Naive thymus-derived CD4-positive, alpha-beta T cell (primary cell): ENCODE measurements at regions of chr5 and their contacts with region 1.

Region 1: DNA sequence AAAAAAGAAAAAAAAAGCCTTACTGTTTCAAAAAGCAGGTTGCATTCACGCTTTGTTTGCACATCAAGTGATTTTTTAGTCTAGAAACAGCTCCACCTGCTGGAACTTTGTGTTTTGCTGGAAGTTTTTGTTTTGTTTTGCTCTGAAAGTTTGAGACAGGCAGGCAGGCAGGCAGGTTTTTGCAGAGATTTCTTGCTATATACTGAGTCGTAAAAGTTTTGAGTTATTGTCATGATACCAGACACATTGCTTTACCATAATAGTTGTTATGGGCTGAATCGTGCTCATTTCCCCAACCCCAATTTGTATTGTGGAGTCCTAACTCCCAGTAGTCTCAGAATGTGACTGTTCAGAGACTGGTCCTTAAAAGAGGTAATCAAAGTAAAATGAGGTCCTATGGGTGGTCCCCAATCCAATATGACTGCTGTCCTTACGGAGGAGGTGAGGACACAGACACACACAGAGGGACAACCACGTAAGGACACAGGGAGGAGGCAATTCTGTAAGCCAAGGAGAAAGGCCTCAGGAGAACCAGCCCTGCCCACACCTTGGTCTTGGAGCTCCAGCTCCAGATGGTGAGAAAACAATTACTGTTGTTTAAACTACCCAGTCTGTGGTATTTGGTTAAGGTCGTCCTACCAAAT is 20.9 kb downstream of the OR2Y1 start:
- DNase-seq: peak in 7 of 9 donors; percentile 32 to 71 (median 63)
- ATAC-seq: no peak
- H3K4me3 ChIP-seq: no peak overlapping the region
- H3K4me3 Mint-ChIP-seq: no peak overlapping the region
- H3K27ac ChIP-seq: no peak overlapping the region
- H3K27ac Mint-ChIP-seq: peak overlapping the region in 3 of 9 donors; percentile 1 to 54 (median 14)
- H3K4me1 ChIP-seq: peaks cover 0 to 16% of the 10 kb centered on the region in 2 donors
- H3K4me1 Mint-ChIP-seq: peaks cover 6 to 21% (median 17%) of the 10 kb centered on the region in 7 donors
- H3K27me3 ChIP-seq: no peaks in the 10 kb centered on the region
- H3K27me3 Mint-ChIP-seq: peaks cover 0 to 15% (median 0%) of the 10 kb centered on the region in 5 donors

Region 2: DNA sequence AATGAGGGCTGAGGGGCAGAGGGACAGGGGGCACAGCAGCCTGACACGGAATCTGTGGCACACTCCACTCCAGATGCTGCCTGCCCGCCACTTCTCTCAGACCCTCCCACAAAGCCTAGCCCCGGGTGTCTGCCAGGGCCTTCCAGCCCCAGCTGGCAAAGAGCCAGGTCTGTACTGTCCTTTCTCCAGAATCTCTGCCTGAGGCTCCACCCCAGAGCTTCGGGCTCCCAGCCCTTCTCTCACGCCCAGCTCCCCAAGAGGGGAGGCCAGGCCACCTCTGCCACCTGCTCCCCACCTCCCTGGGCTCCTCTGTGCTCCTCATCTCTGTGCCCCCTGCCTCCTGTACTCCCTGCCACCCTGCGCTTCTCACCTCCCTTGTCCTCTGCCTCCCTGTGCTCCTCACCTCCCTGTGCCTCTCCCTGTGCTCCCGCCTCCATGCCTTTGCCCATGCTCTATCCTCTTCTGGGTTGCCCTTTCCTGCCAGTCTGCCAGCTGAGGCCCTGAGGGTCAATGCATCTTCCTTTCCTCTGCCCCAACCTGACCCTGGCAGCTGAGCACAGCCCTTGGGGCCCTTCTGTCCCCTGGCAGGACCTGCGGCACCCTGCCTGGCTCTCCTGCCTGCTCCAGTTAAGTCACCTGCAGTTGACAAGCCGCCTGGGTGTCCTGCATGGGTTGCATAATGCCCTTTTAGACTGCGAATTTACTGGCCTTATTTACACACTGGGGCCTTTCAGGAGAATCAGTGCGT is 546.3 kb before region 1 on chr5:
- CTCF ChIA-PET with region 1: no interaction called
- POLR2A ChIA-PET with region 1: no interaction called
- intact Hi-C with region 1: no loop called
- DNase-seq: no peak
- ATAC-seq: no peak
- H3K4me3 ChIP-seq: no peak overlapping the region
- H3K4me3 Mint-ChIP-seq: no peak overlapping the region
- H3K27ac ChIP-seq: no peak overlapping the region
- H3K27ac Mint-ChIP-seq: no peak overlapping the region
- H3K4me1 ChIP-seq: no peaks in the 10 kb centered on the region
- H3K4me1 Mint-ChIP-seq: no peaks in the 10 kb centered on the region
- H3K27me3 ChIP-seq: no peaks in the 10 kb centered on the region
- H3K27me3 Mint-ChIP-seq: peaks cover 0 to 19% (median 1%) of the 10 kb centered on the region in 5 donors

Region 3: DNA sequence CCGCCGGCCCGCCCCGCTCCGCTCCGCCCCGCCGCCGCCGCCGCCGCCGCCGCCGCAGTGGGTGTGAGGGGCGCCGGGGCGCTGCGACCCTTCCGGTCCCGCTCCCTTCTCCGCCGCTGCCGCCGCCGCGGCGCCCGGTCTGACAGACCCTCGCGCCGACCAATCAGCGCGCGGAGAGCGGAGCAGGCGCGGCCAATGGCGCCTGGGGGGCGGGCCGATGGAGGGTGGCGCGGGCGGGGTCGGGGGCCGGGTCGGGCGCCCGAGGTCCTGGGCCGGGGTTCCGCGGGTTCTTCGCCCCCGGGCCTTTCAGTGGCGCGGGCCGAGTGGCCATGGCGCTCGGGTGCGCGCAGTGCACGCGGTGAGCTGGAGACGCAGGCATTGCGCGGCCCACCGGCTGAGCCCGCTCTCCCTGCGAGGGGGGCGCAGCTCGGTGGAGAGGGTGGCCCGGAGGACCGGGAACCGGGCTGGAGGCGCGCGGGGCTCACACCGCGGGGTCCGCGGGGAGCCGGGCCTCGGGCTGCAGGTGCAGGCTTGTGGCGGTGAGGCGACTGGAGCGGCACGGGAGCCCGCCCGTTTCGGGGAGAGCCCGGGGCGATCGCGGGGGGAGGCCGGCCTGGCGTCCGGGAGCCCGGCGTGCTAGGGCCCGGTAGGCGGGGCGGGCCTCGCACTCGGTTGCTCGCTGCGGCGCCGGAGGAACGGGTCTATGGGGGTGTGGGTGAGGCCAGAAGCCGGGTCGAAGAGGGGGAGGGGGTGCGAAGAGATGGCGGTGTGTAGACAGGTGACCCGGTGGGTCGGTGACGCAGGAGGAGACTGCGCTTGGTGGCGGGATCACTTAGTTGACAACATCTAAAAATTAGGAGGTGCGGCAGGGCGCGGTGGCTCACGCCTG is 426.7 kb before region 1 on chr5 and contains the start of gene MAPK9:
- CTCF ChIA-PET with region 1: no interaction called
- POLR2A ChIA-PET with region 1: no interaction called
- intact Hi-C with region 1: loop called in 1 of 2 experiments (anchors 1 kb)
- DNase-seq: peak; percentile 82 to 92 (median 86)
- ATAC-seq: peak; percentile 85
- H3K4me3 ChIP-seq: peak within 1 kb of the TSS; percentile 79
- H3K4me3 Mint-ChIP-seq: peak within 1 kb of the TSS; percentile 90 to 100 (median 98)
- H3K27ac ChIP-seq: peak within 1 kb of the TSS; percentile 96
- H3K27ac Mint-ChIP-seq: peak within 1 kb of the TSS; percentile 96 to 100 (median 99)
- H3K4me1 ChIP-seq: peaks cover 15 to 17% of the 10 kb centered on the region in 2 donors
- H3K4me1 Mint-ChIP-seq: peaks cover 31 to 75% (median 58%) of the 10 kb centered on the region in 7 donors
- H3K27me3 ChIP-seq: no peaks in the 10 kb centered on the region
- H3K27me3 Mint-ChIP-seq: no peaks in the 10 kb centered on the region
- total RNA-seq, gene MAPK9: 25.7 to 41.4 (median 31.2) TPM

Region 4: GRCh38 chr5:180441563-180441962 is 277.4 kb before region 1 on chr5:
- CTCF ChIA-PET with region 1: no interaction called
- POLR2A ChIA-PET with region 1: no interaction called
- intact Hi-C with region 1: no loop called
- DNase-seq: no peak
- ATAC-seq: no peak
- H3K4me3 ChIP-seq: no peak overlapping the region
- H3K4me3 Mint-ChIP-seq: no peak overlapping the region
- H3K27ac ChIP-seq: no peak overlapping the region
- H3K27ac Mint-ChIP-seq: no peak overlapping the region
- H3K4me1 ChIP-seq: no peaks in the 10 kb centered on the region
- H3K4me1 Mint-ChIP-seq: no peaks in the 10 kb centered on the region
- H3K27me3 ChIP-seq: no peaks in the 10 kb centered on the region
- H3K27me3 Mint-ChIP-seq: peaks cover 0 to 21% (median 9%) of the 10 kb centered on the region in 5 donors

Region 5: GRCh38 chr5:180523629-180524466 is 195.1 kb before region 1 on chr5:
- CTCF ChIA-PET with region 1: no interaction called
- POLR2A ChIA-PET with region 1: no interaction called
- intact Hi-C with region 1: loop called in 1 of 2 experiments (anchors 1 kb)
- DNase-seq: no peak
- ATAC-seq: no peak
- H3K4me3 ChIP-seq: no peak overlapping the region
- H3K4me3 Mint-ChIP-seq: peak overlapping the region in 8 of 10 donors; percentile 5 to 52 (median 31)
- H3K27ac ChIP-seq: peak overlapping the region; percentile 12
- H3K27ac Mint-ChIP-seq: peak overlapping the region in 7 of 9 donors; percentile 24 to 86 (median 47)
- H3K4me1 ChIP-seq: peaks cover 5 to 7% of the 10 kb centered on the region in 2 donors
- H3K4me1 Mint-ChIP-seq: peaks cover 45 to 82% (median 70%) of the 10 kb centered on the region in 7 donors
- H3K27me3 ChIP-seq: no peaks in the 10 kb centered on the region
- H3K27me3 Mint-ChIP-seq: no peaks in the 10 kb centered on the region

Region 6: DNA sequence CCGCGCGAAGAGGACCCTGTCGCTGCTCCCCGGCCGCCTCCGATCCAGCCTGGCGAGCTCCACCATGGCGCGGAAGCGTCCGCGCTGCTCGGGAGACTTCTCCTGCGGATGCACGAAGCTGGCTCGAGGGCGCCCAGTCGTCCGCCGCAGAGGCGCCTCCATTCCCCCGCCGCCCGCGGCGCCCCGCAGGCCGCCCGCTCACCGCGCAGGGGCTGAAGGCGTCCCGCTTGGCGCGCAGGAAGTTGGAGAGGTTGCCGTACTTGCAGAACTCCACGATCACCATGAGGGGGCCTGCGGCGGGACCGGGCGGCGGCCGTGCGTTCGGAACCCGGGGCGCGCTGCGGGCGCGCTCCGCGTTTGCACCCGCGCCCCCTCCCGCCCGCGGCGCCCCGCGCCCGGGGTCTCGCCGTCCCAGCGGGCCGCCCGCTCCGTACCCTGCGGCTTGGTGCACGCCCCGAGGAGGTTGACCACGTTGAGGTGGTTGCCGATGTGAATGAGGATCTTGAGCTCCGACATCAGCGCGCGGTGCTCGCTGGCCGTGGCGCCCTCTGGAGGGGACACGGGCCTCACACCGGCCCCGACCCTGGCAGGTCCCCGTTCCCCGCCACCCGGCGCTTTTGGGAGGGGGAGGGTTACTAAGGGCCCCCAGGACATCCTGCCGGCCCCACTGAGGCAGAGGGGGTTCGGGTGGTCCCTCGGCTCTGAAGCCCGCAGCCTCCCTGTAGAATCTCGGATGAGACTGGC is 99.9 kb before region 1 on chr5:
- CTCF ChIA-PET with region 1: interaction called, 8 read pairs
- POLR2A ChIA-PET with region 1: no interaction called
- intact Hi-C with region 1: loop called (anchors 1 to 2 kb)
- DNase-seq: peak in 7 of 9 donors; percentile 20 to 54 (median 42)
- ATAC-seq: peak; percentile 55
- H3K4me3 ChIP-seq: no peak overlapping the region
- H3K4me3 Mint-ChIP-seq: peak overlapping the region in 6 of 10 donors; percentile 29 to 71 (median 54)
- H3K27ac ChIP-seq: no peak overlapping the region
- H3K27ac Mint-ChIP-seq: no peak overlapping the region
- H3K4me1 ChIP-seq: no peaks in the 10 kb centered on the region
- H3K4me1 Mint-ChIP-seq: peaks cover 0 to 11% (median 6%) of the 10 kb centered on the region in 7 donors
- H3K27me3 ChIP-seq: no peaks in the 10 kb centered on the region
- H3K27me3 Mint-ChIP-seq: no peaks in the 10 kb centered on the region

Region 7: GRCh38 chr5:180670586-180671359 is 48.2 kb before region 1 on chr5:
- CTCF ChIA-PET with region 1: interaction called, 5 read pairs
- POLR2A ChIA-PET with region 1: no interaction called
- intact Hi-C with region 1: loop called in 1 of 2 experiments (anchors 1 kb)
- DNase-seq: peak in 8 of 9 donors; percentile 35 to 61 (median 48)
- ATAC-seq: peak; percentile 75
- H3K4me3 ChIP-seq: no peak overlapping the region
- H3K4me3 Mint-ChIP-seq: peak overlapping the region; percentile 48 to 77 (median 62)
- H3K27ac ChIP-seq: no peak overlapping the region
- H3K27ac Mint-ChIP-seq: peak overlapping the region in 5 of 9 donors; percentile 0 to 79 (median 13)
- H3K4me1 ChIP-seq: no peaks in the 10 kb centered on the region
- H3K4me1 Mint-ChIP-seq: peaks cover 7 to 30% (median 23%) of the 10 kb centered on the region in 7 donors
- H3K27me3 ChIP-seq: no peaks in the 10 kb centered on the region
- H3K27me3 Mint-ChIP-seq: peaks cover 5 to 30% (median 7%) of the 10 kb centered on the region in 5 donors

Region 8: GRCh38 chr5:180689071-180689694 is 29.7 kb before region 1 on chr5:
- CTCF ChIA-PET with region 1: interaction called, 43 read pairs
- POLR2A ChIA-PET with region 1: interaction called, 15 read pairs
- intact Hi-C with region 1: loop called (anchors 1 to 2 kb)
- DNase-seq: peak in 8 of 9 donors; percentile 27 to 80 (median 74)
- ATAC-seq: peak; percentile 88
- H3K4me3 ChIP-seq: peak overlapping the region; percentile 35
- H3K4me3 Mint-ChIP-seq: peak overlapping the region; percentile 52 to 87 (median 79)
- H3K27ac ChIP-seq: peak overlapping the region; percentile 75
- H3K27ac Mint-ChIP-seq: peak overlapping the region; percentile 51 to 98 (median 97)
- H3K4me1 ChIP-seq: peaks cover 29 to 75% of the 10 kb centered on the region in 2 donors
- H3K4me1 Mint-ChIP-seq: peaks cover 22 to 85% (median 80%) of the 10 kb centered on the region in 7 donors
- H3K27me3 ChIP-seq: no peaks in the 10 kb centered on the region
- H3K27me3 Mint-ChIP-seq: peaks cover 0 to 10% (median 0%) of the 10 kb centered on the region in 5 donors

Region 9: GRCh38 chr5:180784497-180785097 is 65.7 kb after region 1 on chr5:
- CTCF ChIA-PET with region 1: no interaction called
- POLR2A ChIA-PET with region 1: no interaction called
- intact Hi-C with region 1: no loop called
- DNase-seq: peak; percentile 45 to 78 (median 65)
- ATAC-seq: peak; percentile 87
- H3K4me3 ChIP-seq: no peak overlapping the region
- H3K4me3 Mint-ChIP-seq: no peak overlapping the region
- H3K27ac ChIP-seq: no peak overlapping the region
- H3K27ac Mint-ChIP-seq: peak overlapping the region in 6 of 9 donors; percentile 8 to 76 (median 33)
- H3K4me1 ChIP-seq: peaks cover 0 to 7% of the 10 kb centered on the region in 2 donors
- H3K4me1 Mint-ChIP-seq: peaks cover 23 to 58% (median 46%) of the 10 kb centered on the region in 7 donors
- H3K27me3 ChIP-seq: no peaks in the 10 kb centered on the region
- H3K27me3 Mint-ChIP-seq: no peaks in the 10 kb centered on the region